ENCODE measurements at regions of chr10 and their contacts with region 1.

Region 1: DNA sequence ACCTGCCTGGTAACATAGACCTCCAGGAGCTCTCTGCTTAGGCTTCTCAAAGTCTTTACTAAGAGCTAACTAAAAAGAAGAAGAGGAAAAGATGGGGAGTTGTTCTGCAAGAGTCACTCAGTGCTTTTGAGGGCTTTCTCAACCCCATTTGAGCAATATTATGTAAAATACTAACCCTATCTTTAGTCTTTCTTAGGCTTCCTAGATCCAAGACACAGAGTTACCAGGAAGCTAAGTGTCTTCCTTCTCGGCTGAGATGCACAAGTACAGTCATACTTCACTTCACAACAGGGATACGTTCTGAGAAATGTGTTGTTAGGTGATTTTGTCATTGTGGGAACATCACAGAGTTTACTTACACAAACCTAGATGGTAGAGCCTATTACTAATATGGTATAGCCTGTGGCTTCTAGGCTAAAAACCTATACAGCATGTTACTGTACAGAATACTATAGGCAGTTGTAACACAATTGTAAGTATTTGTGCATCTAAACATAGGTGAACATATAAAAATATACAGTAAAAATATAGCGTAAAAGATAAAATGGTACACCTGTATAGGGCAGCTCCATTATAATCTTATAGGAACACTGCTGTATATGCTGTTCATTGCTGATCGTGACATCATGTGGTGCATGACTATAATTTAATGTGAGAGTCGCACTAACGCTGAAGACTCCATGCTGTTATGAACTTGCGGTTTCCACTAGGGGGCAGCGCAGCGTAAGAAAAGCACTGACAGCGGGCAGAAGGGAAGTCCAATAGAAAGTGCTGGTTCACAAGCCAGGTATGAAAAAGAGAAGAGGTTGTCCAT is 16.3 kb downstream of the ANKRD22 start:
- DNase-seq: peak; percentile 44 to 72 (median 49)
- ATAC-seq: peak; percentile 97
- H3K4me3 ChIP-seq: no peak overlapping the region
- H3K27ac ChIP-seq: no peak overlapping the region
- H3K4me1 ChIP-seq: no peaks in the 10 kb centered on the region
- H3K27me3 ChIP-seq: no peaks in the 10 kb centered on the region
- CTCF ChIP-seq: peak; percentile 71 to 74 (median 73)
- EP300 ChIP-seq: no peak
- POLR2A ChIP-seq: no peak
- RAD21 ChIP-seq: peak; percentile 50 to 77

Region 2: DNA sequence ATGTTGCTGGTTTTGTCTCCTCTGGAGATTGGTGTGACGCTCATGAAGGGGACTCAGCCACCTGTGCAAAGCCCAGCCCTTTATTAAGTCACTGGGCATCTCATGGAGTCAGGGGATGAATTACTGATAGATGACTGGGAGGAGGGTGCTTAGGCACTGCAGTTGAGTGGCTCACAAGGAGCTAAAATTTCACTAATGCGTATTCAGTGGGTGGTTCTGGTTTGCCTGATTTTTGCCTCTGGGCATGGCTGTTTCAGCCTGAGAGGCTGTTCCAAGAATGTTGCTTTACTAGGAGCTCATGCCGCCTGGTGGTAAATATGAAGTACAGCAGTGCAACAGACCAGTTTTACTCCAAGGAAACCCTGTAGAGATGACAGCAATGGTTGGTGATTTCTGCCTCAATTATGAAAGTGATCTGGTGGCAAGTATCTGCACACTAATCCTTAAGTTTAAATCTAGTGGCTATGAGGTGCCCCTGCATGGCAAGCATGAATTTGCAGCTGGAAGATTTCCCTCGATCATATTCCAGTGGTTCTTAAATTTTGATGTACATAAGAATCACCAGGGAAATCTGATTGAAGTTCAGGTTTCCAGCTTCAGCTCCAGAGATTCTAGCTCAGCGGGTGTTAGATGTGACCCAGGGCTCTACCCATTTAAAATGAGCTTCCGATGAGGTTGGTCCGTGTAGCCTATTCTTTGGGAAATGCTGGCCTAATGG is 97.4 kb after region 1 on chr10:
- CTCF ChIA-PET with region 1: interaction called, 10 read pairs
- POLR2A ChIA-PET with region 1: no interaction called
- in situ Hi-C with region 1: no loop called
- intact Hi-C with region 1: loop called (anchors 1 kb)
- DNase-seq: peak; percentile 19 to 35 (median 28)
- ATAC-seq: peak; percentile 83
- H3K4me3 ChIP-seq: no peak overlapping the region
- H3K27ac ChIP-seq: no peak overlapping the region
- H3K4me1 ChIP-seq: no peaks in the 10 kb centered on the region
- H3K27me3 ChIP-seq: no peaks in the 10 kb centered on the region
- CTCF ChIP-seq: peak; percentile 59 to 64 (median 62)
- EP300 ChIP-seq: no peak
- POLR2A ChIP-seq: no peak
- RAD21 ChIP-seq: peak; percentile 66 to 73